Natural killer cell (primary cell): ENCODE measurements at regions of chr1 and their contacts with region 1.

Region 1: GRCh38 chr1:29235955-29236684 is at the start of gene PTPRU:
- DNase-seq: peak; percentile 87
- ATAC-seq: peak; percentile 94 to 96 (median 94)
- H3K4me3 ChIP-seq: peak within 1 kb of the TSS; percentile 1
- H3K4me3 Mint-ChIP-seq: peak within 1 kb of the TSS; percentile 82
- H3K27ac ChIP-seq: no peak within 1 kb of the TSS
- H3K27ac Mint-ChIP-seq: peak within 1 kb of the TSS in 1 of 2 donors; percentile 64
- H3K4me1 ChIP-seq: peaks cover 20% of the 10 kb centered on the region
- H3K4me1 Mint-ChIP-seq: peaks cover 22 to 27% of the 10 kb centered on the region in 2 donors
- H3K27me3 ChIP-seq: peaks cover 37% of the 10 kb centered on the region
- H3K27me3 Mint-ChIP-seq: peaks cover 52% of the 10 kb centered on the region in 2 donors
- CTCF ChIP-seq: peak; percentile 66
- total RNA-seq, gene PTPRU: 0.54 to 1.6 (median 0.79) TPM

Region 2: GRCh38 chr1:28190337-28190979 is 1045.7 kb before region 1 on chr1:
- intact Hi-C with region 1: no loop called
- DNase-seq: no peak
- ATAC-seq: no peak
- H3K4me3 ChIP-seq: no peak overlapping the region
- H3K4me3 Mint-ChIP-seq: no peak overlapping the region
- H3K27ac ChIP-seq: no peak overlapping the region
- H3K27ac Mint-ChIP-seq: no peak overlapping the region
- H3K4me1 ChIP-seq: peaks cover 22% of the 10 kb centered on the region
- H3K4me1 Mint-ChIP-seq: peaks cover 17 to 22% of the 10 kb centered on the region in 2 donors
- H3K27me3 ChIP-seq: no peaks in the 10 kb centered on the region
- H3K27me3 Mint-ChIP-seq: no peaks in the 10 kb centered on the region
- CTCF ChIP-seq: no peak

Region 3: DNA sequence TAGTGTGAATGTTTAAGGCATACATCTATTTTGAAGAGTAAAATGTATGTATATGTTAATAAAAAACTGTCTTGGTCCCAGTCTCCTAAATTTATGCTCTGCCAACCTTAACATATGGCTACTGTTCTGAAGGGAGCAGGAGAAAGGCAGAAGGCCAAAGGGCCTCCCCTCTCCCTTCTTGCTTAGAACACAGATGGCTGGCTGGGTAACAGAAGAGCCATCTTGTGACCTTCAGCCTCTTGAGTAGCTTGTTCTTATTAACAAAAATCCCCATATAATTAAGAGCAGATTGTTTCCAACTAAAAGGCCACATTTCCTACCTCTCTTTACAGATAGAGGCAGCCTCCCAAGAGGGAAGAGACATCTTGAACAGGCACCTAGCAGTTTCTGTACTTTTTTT is 285.7 kb before region 1 on chr1:
- intact Hi-C with region 1: no loop called
- DNase-seq: no peak
- ATAC-seq: no peak
- H3K4me3 ChIP-seq: no peak overlapping the region
- H3K4me3 Mint-ChIP-seq: no peak overlapping the region
- H3K27ac ChIP-seq: no peak overlapping the region
- H3K27ac Mint-ChIP-seq: peak overlapping the region; percentile 8 to 52
- H3K4me1 ChIP-seq: peaks cover 6% of the 10 kb centered on the region
- H3K4me1 Mint-ChIP-seq: peaks cover 23 to 40% of the 10 kb centered on the region in 2 donors
- H3K27me3 ChIP-seq: no peaks in the 10 kb centered on the region
- H3K27me3 Mint-ChIP-seq: no peaks in the 10 kb centered on the region
- CTCF ChIP-seq: no peak

Region 4: DNA sequence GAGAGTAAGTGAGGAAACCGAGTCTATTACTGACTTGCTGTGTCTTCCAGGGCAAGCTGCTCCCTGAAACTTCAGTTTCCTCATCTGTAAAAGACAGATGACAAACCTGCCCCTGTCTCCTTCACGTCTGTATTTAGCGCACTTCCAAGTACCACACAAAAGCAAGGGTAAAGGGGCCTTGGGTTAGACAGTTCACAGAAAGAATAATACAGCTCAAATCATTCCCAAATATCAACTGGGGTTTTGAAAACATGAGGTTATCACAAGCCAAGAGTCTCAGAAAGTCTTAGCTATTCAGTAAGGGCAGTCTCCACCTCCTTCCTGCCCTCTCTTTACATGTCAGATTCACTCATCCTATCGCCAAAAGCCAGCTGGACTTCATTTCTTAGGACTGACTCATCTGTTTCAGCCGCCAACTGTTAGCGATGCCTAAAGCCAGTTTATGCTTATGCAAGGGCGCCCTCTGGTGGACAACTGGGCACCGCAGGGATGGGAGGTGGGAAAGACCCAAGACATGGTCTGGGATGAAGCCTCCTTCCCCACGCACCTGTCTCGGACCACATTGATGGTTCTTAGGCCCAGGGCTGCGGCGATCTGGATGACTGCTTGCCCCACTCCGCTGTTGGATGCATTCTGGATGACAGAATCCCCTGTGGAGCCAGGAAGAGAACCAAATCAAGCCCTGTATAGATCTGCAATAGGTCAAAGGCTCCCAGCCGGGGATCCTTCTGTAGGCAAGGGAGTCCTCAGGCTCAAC is 33.4 kb before region 1 on chr1:
- intact Hi-C with region 1: no loop called
- DNase-seq: peak; percentile 86 to 92
- ATAC-seq: peak; percentile 92 to 98 (median 96)
- H3K4me3 ChIP-seq: no peak overlapping the region
- H3K4me3 Mint-ChIP-seq: no peak overlapping the region
- H3K27ac ChIP-seq: no peak overlapping the region
- H3K27ac Mint-ChIP-seq: peak overlapping the region in 1 of 2 donors; percentile 31
- H3K4me1 ChIP-seq: no peaks in the 10 kb centered on the region
- H3K4me1 Mint-ChIP-seq: peaks cover 0 to 4% of the 10 kb centered on the region in 2 donors
- H3K27me3 ChIP-seq: no peaks in the 10 kb centered on the region
- H3K27me3 Mint-ChIP-seq: no peaks in the 10 kb centered on the region
- CTCF ChIP-seq: peak; percentile 97

Region 5: DNA sequence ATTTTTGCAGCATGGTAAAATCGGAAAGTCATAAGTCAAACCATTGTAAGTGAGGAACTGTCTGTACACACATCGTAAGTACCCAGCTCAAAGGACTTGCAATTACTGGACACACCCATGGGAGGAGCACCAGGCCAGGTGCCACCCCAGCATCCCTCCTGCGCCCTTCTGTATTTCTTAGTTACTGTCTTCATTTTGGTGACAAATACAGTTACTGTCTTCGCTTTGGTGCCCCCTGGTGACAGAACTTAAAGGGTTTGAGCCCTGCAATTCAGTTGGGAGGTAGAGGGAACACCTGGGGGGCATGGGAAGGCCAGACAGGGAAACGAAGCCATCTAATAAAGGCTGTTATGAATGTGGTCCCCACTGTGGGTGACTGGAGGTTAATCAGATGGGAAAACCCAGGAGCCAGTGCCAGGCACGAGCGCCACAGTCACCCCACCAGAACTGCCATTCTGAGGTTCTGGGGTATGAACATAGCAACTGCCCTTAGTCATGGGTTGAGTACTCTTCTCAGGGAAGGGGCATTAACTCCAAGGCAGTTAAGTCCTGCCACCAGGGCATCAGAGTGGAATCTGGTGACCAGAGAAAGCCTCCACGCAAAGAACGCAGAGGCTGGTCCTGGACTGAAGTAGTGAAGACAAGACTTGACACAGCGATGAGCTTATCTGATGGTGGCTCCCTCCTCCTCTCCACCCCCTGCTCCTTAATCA is 613.1 kb after region 1 on chr1:
- intact Hi-C with region 1: loop called (anchors 2 kb)
- DNase-seq: peak in 1 of 2 donors; percentile 58
- ATAC-seq: peak in 1 of 3 donors; percentile 28
- H3K4me3 ChIP-seq: no peak overlapping the region
- H3K4me3 Mint-ChIP-seq: no peak overlapping the region
- H3K27ac ChIP-seq: no peak overlapping the region
- H3K27ac Mint-ChIP-seq: no peak overlapping the region
- H3K4me1 ChIP-seq: no peaks in the 10 kb centered on the region
- H3K4me1 Mint-ChIP-seq: peaks cover 8 to 10% of the 10 kb centered on the region in 2 donors
- H3K27me3 ChIP-seq: no peaks in the 10 kb centered on the region
- H3K27me3 Mint-ChIP-seq: peaks cover 0 to 4% of the 10 kb centered on the region in 2 donors
- CTCF ChIP-seq: no peak

Region 6: GRCh38 chr1:30106125-30106524 is 870.0 kb after region 1 on chr1:
- intact Hi-C with region 1: loop called (anchors 5 kb)
- DNase-seq: peak in 1 of 2 donors; percentile 15
- ATAC-seq: peak in 1 of 3 donors; percentile 67
- H3K4me3 ChIP-seq: no peak overlapping the region
- H3K4me3 Mint-ChIP-seq: no peak overlapping the region
- H3K27ac ChIP-seq: no peak overlapping the region
- H3K27ac Mint-ChIP-seq: no peak overlapping the region
- H3K4me1 ChIP-seq: no peaks in the 10 kb centered on the region
- H3K4me1 Mint-ChIP-seq: peaks cover 0 to 5% of the 10 kb centered on the region in 2 donors
- H3K27me3 ChIP-seq: peaks cover 2% of the 10 kb centered on the region
- H3K27me3 Mint-ChIP-seq: peaks cover 10 to 47% of the 10 kb centered on the region in 2 donors
- CTCF ChIP-seq: no peak

Region 7: GRCh38 chr1:30232288-30232899 is 996.3 kb after region 1 on chr1:
- intact Hi-C with region 1: loop called (anchors 5 kb)
- DNase-seq: peak in 1 of 2 donors; percentile 47
- ATAC-seq: peak in 2 of 3 donors; percentile 58 to 70
- H3K4me3 ChIP-seq: no peak overlapping the region
- H3K4me3 Mint-ChIP-seq: no peak overlapping the region
- H3K27ac ChIP-seq: no peak overlapping the region
- H3K27ac Mint-ChIP-seq: no peak overlapping the region
- H3K4me1 ChIP-seq: no peaks in the 10 kb centered on the region
- H3K4me1 Mint-ChIP-seq: no peaks in the 10 kb centered on the region
- H3K27me3 ChIP-seq: no peaks in the 10 kb centered on the region
- H3K27me3 Mint-ChIP-seq: no peaks in the 10 kb centered on the region
- CTCF ChIP-seq: peak; percentile 82

Region 8: DNA sequence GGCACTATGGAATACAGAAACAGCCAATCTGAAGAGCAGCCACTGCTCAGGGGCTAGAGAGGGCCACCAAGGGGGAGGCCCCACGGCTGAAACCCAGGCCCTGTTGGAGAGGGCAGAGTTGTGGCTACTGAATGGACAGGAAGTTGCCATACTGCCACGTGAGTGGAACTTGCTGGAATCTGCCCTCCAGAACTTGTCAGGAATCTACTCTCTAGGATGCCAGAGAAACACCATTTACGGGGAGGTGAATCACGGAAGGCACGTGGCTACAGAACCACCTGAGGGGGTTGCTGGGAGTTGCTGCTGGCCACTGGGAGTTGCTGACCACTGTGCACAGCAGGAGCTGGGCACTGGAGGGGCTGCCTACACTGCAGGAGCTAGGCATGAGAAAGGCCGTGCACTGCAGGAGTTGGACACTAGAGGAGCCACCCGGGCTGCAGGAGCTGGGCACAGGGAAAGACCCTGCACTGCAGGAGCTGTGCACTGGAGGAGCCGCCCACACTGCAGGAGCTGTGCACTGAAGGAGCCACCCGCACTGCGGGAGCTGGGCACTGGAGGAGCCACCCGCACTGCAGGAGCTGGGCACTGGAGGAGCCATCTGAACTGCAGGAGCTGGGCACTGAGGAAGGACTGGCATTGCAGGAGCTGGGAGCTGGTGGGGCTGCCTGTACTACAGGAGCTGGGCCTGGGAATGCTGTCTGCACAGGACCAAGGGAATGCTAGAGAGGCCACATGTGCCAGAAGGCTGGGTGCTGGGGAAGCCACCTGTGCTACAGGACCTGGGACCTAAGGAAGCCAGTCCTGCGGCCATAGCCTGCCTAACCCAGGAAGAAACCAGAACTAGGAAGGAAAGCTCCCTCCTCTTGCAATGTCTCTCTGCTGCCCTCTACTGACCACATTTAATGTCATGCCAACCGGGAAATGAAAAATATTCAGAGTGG is 1143.8 kb after region 1 on chr1:
- intact Hi-C with region 1: loop called (anchors 2 kb)
- DNase-seq: peak; percentile 16 to 81
- ATAC-seq: peak; percentile 61 to 81 (median 61)
- H3K4me3 ChIP-seq: no peak overlapping the region
- H3K4me3 Mint-ChIP-seq: no peak overlapping the region
- H3K27ac ChIP-seq: no peak overlapping the region
- H3K27ac Mint-ChIP-seq: no peak overlapping the region
- H3K4me1 ChIP-seq: no peaks in the 10 kb centered on the region
- H3K4me1 Mint-ChIP-seq: peaks cover 0 to 13% of the 10 kb centered on the region in 2 donors
- H3K27me3 ChIP-seq: peaks cover 2% of the 10 kb centered on the region
- H3K27me3 Mint-ChIP-seq: peaks cover 0 to 10% of the 10 kb centered on the region in 2 donors
- CTCF ChIP-seq: peak; percentile 80